ENCODE measurements at regions of chr13 and their contacts with region 1.

Region 1: GRCh38 chr13:109786457-109787134 is at the start of gene IRS2:
- DNase-seq: peak; percentile 90 to 97
- H3K4me3 ChIP-seq: peak within 1 kb of the TSS; percentile 85
- H3K27ac ChIP-seq: peak within 1 kb of the TSS; percentile 91 to 93
- H3K4me1 ChIP-seq: peaks cover 14 to 22% of the 10 kb centered on the region in 2 donors
- H3K27me3 ChIP-seq: no peaks in the 10 kb centered on the region
- CTCF ChIP-seq: no peak
- total RNA-seq, gene IRS2: 42.4 TPM

Region 2: GRCh38 chr13:108915634-108916512 is 870.7 kb before region 1 on chr13:
- intact Hi-C with region 1: loop called (anchors 5 kb)
- DNase-seq: peak; percentile 85 to 95
- H3K4me3 ChIP-seq: peak overlapping the region; percentile 31 to 41
- H3K27ac ChIP-seq: peak overlapping the region; percentile 79 to 91
- H3K4me1 ChIP-seq: peaks cover 3 to 15% of the 10 kb centered on the region in 2 donors
- H3K27me3 ChIP-seq: no peaks in the 10 kb centered on the region
- CTCF ChIP-seq: no peak

Region 3: GRCh38 chr13:109243311-109243951 is 543.2 kb before region 1 on chr13:
- intact Hi-C with region 1: loop called (anchors 5 kb)
- DNase-seq: peak in 1 of 2 donors; percentile 79
- H3K4me3 ChIP-seq: peak overlapping the region; percentile 37
- H3K27ac ChIP-seq: peak overlapping the region; percentile 59 to 77
- H3K4me1 ChIP-seq: peaks cover 0 to 19% of the 10 kb centered on the region in 2 donors
- H3K27me3 ChIP-seq: no peaks in the 10 kb centered on the region
- CTCF ChIP-seq: no peak

Region 4: DNA sequence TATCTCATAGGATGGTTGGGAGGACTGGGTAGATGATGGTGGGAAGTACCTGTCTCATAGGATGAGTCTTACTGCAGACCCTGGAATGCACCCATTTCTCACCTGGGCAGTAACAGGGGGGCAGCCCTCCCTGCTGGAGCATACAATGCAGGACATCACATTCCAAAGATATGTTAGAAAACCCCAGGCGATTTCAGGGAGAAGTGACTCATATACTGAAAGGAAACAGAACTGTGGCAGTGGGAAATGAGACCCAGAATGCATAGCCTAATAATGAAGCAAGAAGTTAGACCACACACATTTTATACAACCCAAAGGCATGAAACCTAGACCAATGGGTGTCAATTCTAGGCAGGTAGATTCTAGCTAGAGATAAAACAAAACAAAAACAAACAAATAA is 402.9 kb before region 1 on chr13:
- intact Hi-C with region 1: loop called (anchors 10 kb)
- DNase-seq: no peak
- H3K4me3 ChIP-seq: no peak overlapping the region
- H3K27ac ChIP-seq: no peak overlapping the region
- H3K4me1 ChIP-seq: peaks cover 0 to 5% of the 10 kb centered on the region in 2 donors
- H3K27me3 ChIP-seq: no peaks in the 10 kb centered on the region
- CTCF ChIP-seq: no peak

Region 5: GRCh38 chr13:109869312-109870237 is 83.0 kb after region 1 on chr13:
- intact Hi-C with region 1: loop called (anchors 5 kb)
- DNase-seq: peak in 1 of 2 donors; percentile 85
- H3K4me3 ChIP-seq: peak overlapping the region; percentile 39 to 57
- H3K27ac ChIP-seq: peak overlapping the region; percentile 41 to 61
- H3K4me1 ChIP-seq: peaks cover 0 to 22% of the 10 kb centered on the region in 2 donors
- H3K27me3 ChIP-seq: no peaks in the 10 kb centered on the region
- CTCF ChIP-seq: peak in 2 of 3 experiments; percentile 33 to 43

Region 6: GRCh38 chr13:110108347-110109174 is 322.0 kb after region 1 on chr13:
- intact Hi-C with region 1: loop called (anchors 2 kb)
- DNase-seq: peak in 1 of 2 donors; percentile 88
- H3K4me3 ChIP-seq: no peak overlapping the region
- H3K27ac ChIP-seq: peak overlapping the region; percentile 43 to 44
- H3K4me1 ChIP-seq: peaks cover 0 to 24% of the 10 kb centered on the region in 2 donors
- H3K27me3 ChIP-seq: no peaks in the 10 kb centered on the region
- CTCF ChIP-seq: peak; percentile 69 to 77 (median 69)

Region 7: DNA sequence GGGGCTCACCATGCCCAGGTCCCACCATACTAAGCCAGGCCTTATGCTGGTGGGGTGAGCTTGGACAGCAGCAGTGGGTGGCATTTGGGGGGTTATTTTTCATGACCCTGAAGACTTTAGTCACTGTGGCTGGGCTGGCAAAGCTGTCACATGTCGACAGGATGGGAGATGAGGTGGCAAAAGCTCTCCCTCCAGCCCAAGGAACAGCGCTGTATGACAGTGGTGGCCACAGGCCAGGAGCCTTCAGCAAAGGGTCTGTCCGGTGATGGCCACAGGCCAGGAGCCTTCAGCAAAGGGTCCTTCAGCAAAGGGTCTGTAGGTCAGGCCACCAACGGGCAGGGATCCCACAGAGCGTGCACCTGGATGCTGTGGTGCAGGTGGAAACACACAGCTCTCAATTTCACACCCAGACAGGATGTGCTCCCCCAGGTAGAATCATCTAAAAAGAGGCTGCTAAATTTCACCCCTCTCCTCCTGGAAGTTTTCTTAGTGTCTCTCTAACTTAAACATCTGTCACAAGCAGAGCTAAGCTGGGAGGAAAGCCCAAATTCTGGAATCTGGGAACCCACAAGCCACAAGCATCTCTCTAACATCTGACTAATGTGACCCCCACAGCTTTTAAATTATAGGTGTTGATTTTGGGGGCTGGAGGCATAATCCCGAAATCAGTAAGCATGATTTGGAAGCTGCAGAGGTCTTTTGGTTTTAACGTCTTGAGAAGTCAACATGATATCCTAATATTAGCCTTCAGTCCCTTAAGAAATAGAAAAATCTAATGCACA is 497.3 kb after region 1 on chr13:
- intact Hi-C with region 1: no loop called
- DNase-seq: peak in 1 of 2 donors; percentile 63
- H3K4me3 ChIP-seq: no peak overlapping the region
- H3K27ac ChIP-seq: peak overlapping the region; percentile 39 to 44
- H3K4me1 ChIP-seq: peaks cover 11 to 61% of the 10 kb centered on the region in 2 donors
- H3K27me3 ChIP-seq: no peaks in the 10 kb centered on the region
- CTCF ChIP-seq: no peak

Measured in ascending aorta (tissue), 2 donors.